ENCODE measurements at regions of chr6 and their contacts with region 1.

Region 1: DNA sequence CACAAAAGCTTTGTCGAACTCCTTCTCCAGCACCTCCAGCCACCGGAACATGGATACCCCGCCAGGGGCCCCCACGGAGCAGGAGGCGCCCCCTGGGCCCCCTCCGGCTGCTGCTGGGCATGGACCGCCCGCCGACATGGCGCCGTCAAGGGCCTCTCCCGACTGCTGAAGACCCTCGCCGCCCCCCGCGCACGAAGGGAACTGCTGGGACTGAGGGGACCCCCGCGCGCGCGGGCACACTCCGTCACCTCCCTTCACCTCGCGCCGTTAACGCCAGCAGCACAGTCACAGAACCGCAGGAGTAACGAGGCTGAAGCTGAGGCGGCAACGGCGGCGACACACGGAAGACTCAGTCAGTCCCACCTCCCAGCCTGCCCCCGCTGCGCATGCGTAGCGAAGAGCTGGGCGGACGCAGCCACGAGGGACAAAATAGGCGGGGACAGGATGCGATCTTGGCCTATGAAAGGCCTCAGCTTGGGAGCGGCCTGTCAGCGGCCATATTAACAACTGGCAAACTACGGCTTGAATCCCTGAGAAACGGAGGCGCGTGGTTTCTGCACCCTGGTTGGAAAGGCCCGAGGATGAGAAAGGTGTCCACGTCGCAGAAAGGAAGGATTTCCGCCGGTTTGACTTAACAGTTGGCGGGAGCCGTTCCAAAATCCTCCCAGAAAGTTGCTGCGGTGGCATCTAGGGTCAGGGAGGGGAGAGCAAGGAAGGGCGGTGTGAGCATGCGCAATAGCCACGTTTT is at the start of gene GOPC:
- DNase-seq: peak; percentile 94 to 98 (median 97)
- H3K4me3 ChIP-seq: peak within 1 kb of the TSS; percentile 53 to 87
- H3K4me3 Mint-ChIP-seq: peak within 1 kb of the TSS; percentile 96 to 100 (median 100)
- H3K27ac ChIP-seq: peak within 1 kb of the TSS; percentile 75
- H3K27ac Mint-ChIP-seq: peak within 1 kb of the TSS; percentile 93 to 100 (median 99)
- H3K4me1 ChIP-seq: peaks cover 38% of the 10 kb centered on the region
- H3K4me1 Mint-ChIP-seq: peaks cover 34 to 52% (median 43%) of the 10 kb centered on the region in 4 donors
- H3K27me3 ChIP-seq: no peaks in the 10 kb centered on the region
- H3K27me3 Mint-ChIP-seq: peaks cover 0 to 3% of the 10 kb centered on the region in 2 donors
- total RNA-seq, gene GOPC: 37.7 to 37.8 TPM

Region 2: DNA sequence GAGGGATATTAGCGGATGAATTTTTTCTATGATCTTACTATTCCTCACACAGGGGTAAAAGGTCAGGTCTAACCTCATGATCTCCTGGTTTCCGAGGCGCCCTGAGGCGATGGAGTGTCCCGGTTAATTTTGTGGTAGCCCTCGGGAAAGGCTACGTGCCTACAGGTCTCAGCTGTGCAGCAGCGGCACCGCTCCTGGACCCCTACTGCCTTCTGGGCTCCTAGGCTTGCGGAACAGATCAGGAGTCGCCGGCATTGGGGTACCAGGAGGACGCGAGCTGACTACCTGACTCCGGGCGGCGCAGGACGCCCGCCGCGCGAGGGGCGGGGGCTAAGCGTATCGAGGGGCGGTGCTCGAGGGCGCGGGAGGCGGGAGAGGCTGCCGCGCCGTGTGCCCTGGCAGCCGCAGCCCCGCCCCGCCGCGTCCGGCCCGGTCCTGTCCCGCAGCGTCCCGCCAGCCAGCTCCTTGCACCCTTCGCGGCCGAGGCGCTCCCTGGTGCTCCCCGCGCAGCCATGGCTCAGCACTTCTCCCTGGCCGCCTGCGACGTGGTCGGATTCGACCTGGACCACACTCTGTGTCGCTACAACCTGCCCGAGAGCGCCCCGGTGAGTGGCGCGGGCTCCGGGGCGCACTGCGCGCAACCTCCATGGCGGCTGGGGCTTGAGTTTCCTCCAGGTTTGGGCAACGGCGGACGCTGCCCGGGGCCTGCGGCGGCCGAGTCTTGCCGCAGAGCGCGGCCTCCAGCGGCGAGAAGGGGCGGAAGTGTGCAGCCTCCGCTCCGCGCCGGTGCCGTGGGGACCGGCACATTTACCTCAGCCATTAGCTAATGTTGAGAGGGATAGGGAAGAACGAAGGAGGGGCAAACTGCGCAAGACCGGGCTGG is 1501.7 kb before region 1 on chr6 and contains the start of gene NT5DC1:
- CTCF ChIA-PET with region 1: no interaction called
- POLR2A ChIA-PET with region 1: no interaction called
- intact Hi-C with region 1: loop called (anchors 2 kb)
- DNase-seq: peak; percentile 81 to 86 (median 84)
- H3K4me3 ChIP-seq: peak within 1 kb of the TSS; percentile 66 to 71
- H3K4me3 Mint-ChIP-seq: peak within 1 kb of the TSS; percentile 94 to 99 (median 98)
- H3K27ac ChIP-seq: peak within 1 kb of the TSS; percentile 86
- H3K27ac Mint-ChIP-seq: peak within 1 kb of the TSS; percentile 89 to 97 (median 93)
- H3K4me1 ChIP-seq: peaks cover 49% of the 10 kb centered on the region
- H3K4me1 Mint-ChIP-seq: peaks cover 44 to 57% (median 48%) of the 10 kb centered on the region in 4 donors
- H3K27me3 ChIP-seq: no peaks in the 10 kb centered on the region
- H3K27me3 Mint-ChIP-seq: no peaks in the 10 kb centered on the region
- total RNA-seq, gene NT5DC1: 50.5 to 51.9 TPM

Region 3: GRCh38 chr6:117346142-117346930 is 256.0 kb before region 1 on chr6:
- CTCF ChIA-PET with region 1: interaction called, 14 read pairs
- POLR2A ChIA-PET with region 1: no interaction called
- intact Hi-C with region 1: loop called (anchors 1 kb)
- DNase-seq: peak in 4 of 5 donors; percentile 22 to 31 (median 28)
- H3K4me3 ChIP-seq: no peak overlapping the region
- H3K4me3 Mint-ChIP-seq: peak overlapping the region in 1 of 8 donors; percentile 12
- H3K27ac ChIP-seq: no peak overlapping the region
- H3K27ac Mint-ChIP-seq: no peak overlapping the region
- H3K4me1 ChIP-seq: no peaks in the 10 kb centered on the region
- H3K4me1 Mint-ChIP-seq: no peaks in the 10 kb centered on the region
- H3K27me3 ChIP-seq: no peaks in the 10 kb centered on the region
- H3K27me3 Mint-ChIP-seq: peaks cover 5 to 6% of the 10 kb centered on the region in 2 donors

Region 4: DNA sequence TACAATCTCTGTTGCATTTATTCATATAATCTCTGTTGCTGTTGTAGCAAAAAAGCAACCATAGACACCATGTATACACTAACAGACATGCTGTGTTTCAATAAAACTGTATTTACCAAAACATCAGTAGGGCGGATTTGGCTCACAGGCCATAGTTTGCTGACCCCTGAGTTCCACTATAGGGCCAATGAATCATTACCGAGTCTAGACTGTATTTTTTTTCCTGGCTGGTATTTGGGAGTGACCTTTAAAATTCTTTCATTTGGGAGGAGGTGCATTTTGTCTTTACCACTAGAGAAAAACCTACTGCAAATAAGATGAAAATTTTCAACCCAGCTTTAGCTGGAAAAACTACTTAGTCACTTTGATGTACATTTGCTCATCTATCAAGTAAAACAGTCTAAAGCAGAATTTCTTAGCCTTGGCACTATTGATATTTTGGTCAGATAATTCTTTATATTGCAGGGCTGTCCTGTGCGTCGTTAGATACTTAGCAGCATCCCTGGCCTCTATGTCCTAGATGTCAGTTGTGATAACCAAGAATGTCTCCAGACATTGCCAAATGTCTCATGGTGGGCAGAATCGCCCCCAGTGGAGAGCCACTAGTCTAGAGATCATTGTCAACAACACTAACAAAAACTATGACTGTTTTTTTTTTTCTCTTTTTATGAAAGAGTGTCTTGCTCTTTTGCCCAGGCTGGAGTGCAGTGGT is 80.4 kb before region 1 on chr6:
- CTCF ChIA-PET with region 1: no interaction called
- POLR2A ChIA-PET with region 1: no interaction called
- intact Hi-C with region 1: no loop called
- DNase-seq: no peak
- H3K4me3 ChIP-seq: no peak overlapping the region
- H3K4me3 Mint-ChIP-seq: no peak overlapping the region
- H3K27ac ChIP-seq: no peak overlapping the region
- H3K27ac Mint-ChIP-seq: no peak overlapping the region
- H3K4me1 ChIP-seq: no peaks in the 10 kb centered on the region
- H3K4me1 Mint-ChIP-seq: no peaks in the 10 kb centered on the region
- H3K27me3 ChIP-seq: no peaks in the 10 kb centered on the region
- H3K27me3 Mint-ChIP-seq: peaks cover 0 to 3% of the 10 kb centered on the region in 2 donors

Region 5: DNA sequence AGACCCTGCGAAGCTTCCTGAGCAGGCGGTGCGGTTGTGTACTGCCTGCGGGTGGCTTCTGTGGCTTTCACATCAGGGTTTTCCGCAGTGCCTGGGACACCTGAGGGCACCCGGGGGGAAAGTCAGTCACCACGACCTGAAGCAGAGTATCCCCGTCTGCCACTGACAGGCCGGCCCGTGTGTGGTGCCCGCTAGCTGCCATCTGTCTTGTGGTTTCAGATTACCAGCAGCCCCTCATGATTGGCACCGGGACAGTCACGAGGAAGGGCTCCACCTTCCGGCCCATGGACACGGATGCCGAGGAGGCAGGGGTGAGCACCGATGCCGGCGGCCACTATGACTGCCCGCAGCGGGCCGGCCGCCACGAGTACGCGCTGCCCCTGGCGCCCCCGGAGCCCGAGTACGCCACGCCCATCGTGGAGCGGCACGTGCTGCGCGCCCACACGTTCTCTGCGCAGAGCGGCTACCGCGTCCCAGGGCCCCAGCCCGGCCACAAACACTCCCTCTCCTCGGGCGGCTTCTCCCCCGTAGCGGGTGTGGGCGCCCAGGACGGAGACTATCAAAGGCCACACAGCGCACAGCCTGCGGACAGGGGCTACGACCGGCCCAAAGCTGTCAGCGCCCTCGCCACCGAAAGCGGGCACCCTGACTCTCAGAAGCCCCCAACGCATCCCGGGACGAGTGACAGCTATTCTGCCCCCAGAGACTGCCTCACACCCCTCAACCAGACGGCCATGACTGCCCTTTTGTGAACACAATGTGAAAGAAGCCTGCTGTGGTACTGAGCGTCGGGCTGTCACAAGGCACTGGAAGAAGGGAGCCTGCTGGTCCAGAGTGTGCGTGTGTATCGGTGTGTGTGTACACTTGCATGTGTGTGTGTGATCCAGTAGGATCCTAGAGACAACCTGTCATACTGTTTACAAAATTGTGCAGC is 54.4 kb before region 1 on chr6:
- CTCF ChIA-PET with region 1: interaction called, 34 read pairs
- POLR2A ChIA-PET with region 1: interaction called, 55 read pairs
- intact Hi-C with region 1: loop called (anchors 1 kb)
- DNase-seq: peak; percentile 32 to 74 (median 43)
- H3K4me3 ChIP-seq: peak overlapping the region; percentile 50 to 73
- H3K4me3 Mint-ChIP-seq: peak overlapping the region; percentile 82 to 91 (median 88)
- H3K27ac ChIP-seq: peak overlapping the region; percentile 41
- H3K27ac Mint-ChIP-seq: peak overlapping the region; percentile 86 to 98 (median 92)
- H3K4me1 ChIP-seq: peaks cover 38% of the 10 kb centered on the region
- H3K4me1 Mint-ChIP-seq: peaks cover 26 to 49% (median 40%) of the 10 kb centered on the region in 4 donors
- H3K27me3 ChIP-seq: no peaks in the 10 kb centered on the region
- H3K27me3 Mint-ChIP-seq: no peaks in the 10 kb centered on the region

Region 6: DNA sequence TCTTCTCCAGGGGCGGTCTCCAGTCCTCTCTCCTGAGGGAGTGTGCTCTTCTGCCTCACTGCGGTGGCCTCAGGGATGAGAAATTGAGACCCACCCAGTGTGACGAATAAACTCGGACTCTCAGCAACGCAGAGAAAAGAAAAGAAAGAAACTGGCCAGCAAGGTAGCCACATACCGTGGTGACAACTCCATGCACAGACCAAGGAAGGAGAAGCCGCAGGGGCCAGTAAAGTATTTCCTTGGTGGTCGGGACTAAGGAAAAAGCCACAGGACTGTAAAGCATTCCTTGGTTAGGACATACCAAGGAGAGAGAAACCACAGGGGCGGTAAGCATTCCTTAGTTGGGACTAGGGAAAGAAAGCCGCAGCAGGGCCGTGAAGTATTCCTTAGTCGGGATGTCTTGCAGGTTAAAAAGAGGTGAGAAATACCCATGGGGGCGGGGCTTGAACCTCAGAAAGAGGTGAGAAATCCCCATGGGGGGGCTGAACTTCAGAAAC is 13.6 kb after region 1 on chr6:
- CTCF ChIA-PET with region 1: interaction called, 11 read pairs
- POLR2A ChIA-PET with region 1: no interaction called
- intact Hi-C with region 1: no loop called
- DNase-seq: no peak
- H3K4me3 ChIP-seq: no peak overlapping the region
- H3K4me3 Mint-ChIP-seq: peak overlapping the region in 2 of 8 donors; percentile 21 to 48
- H3K27ac ChIP-seq: no peak overlapping the region
- H3K27ac Mint-ChIP-seq: peak overlapping the region in 5 of 7 donors; percentile 51 to 89 (median 84)
- H3K4me1 ChIP-seq: peaks cover 15% of the 10 kb centered on the region
- H3K4me1 Mint-ChIP-seq: peaks cover 8 to 40% (median 21%) of the 10 kb centered on the region in 4 donors
- H3K27me3 ChIP-seq: no peaks in the 10 kb centered on the region
- H3K27me3 Mint-ChIP-seq: peaks cover 3 to 4% of the 10 kb centered on the region in 2 donors

Region 7: GRCh38 chr6:117985916-117986315 is 383.6 kb after region 1 on chr6:
- CTCF ChIA-PET with region 1: no interaction called
- POLR2A ChIA-PET with region 1: no interaction called
- intact Hi-C with region 1: no loop called
- DNase-seq: no peak
- H3K4me3 ChIP-seq: no peak overlapping the region
- H3K4me3 Mint-ChIP-seq: no peak overlapping the region
- H3K27ac ChIP-seq: no peak overlapping the region
- H3K27ac Mint-ChIP-seq: no peak overlapping the region
- H3K4me1 ChIP-seq: no peaks in the 10 kb centered on the region
- H3K4me1 Mint-ChIP-seq: no peaks in the 10 kb centered on the region
- H3K27me3 ChIP-seq: no peaks in the 10 kb centered on the region
- H3K27me3 Mint-ChIP-seq: peaks cover 0 to 7% of the 10 kb centered on the region in 2 donors

Region 8: DNA sequence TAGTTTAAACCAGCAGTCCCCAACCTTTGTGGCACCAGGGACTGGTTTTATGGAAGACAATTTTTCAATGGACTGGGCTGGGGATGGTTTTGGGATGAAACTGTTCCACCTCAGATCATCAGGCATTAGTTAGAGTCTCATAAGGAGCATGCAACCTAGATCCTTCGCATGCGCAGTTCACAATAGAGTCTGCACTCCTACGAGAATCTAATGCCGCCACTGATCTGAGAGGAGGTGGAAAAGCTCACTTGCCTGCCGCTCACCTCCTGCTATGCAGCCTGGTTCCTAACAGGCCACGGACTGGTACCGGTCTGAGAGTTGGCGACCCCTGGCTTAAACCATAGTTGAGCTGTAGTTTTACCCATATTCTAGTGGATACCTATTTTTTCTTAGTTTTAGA is 459.3 kb after region 1 on chr6:
- CTCF ChIA-PET with region 1: no interaction called
- POLR2A ChIA-PET with region 1: no interaction called
- intact Hi-C with region 1: no loop called
- DNase-seq: no peak
- H3K4me3 ChIP-seq: no peak overlapping the region
- H3K4me3 Mint-ChIP-seq: no peak overlapping the region
- H3K27ac ChIP-seq: no peak overlapping the region
- H3K27ac Mint-ChIP-seq: no peak overlapping the region
- H3K4me1 ChIP-seq: no peaks in the 10 kb centered on the region
- H3K4me1 Mint-ChIP-seq: no peaks in the 10 kb centered on the region
- H3K27me3 ChIP-seq: no peaks in the 10 kb centered on the region
- H3K27me3 Mint-ChIP-seq: peaks cover 2 to 4% of the 10 kb centered on the region in 2 donors

Region 9: GRCh38 chr6:119349323-119350042 is 1747.2 kb after region 1 on chr6 and contains the start of gene MAN1A1:
- CTCF ChIA-PET with region 1: no interaction called
- POLR2A ChIA-PET with region 1: interaction called, 5 read pairs
- intact Hi-C with region 1: loop called (anchors 1 kb)
- DNase-seq: peak; percentile 85 to 93 (median 91)
- H3K4me3 ChIP-seq: peak within 1 kb of the TSS; percentile 73 to 81
- H3K4me3 Mint-ChIP-seq: peak within 1 kb of the TSS; percentile 86 to 98 (median 94)
- H3K27ac ChIP-seq: peak within 1 kb of the TSS; percentile 88
- H3K27ac Mint-ChIP-seq: peak within 1 kb of the TSS; percentile 83 to 90 (median 88)
- H3K4me1 ChIP-seq: peaks cover 33% of the 10 kb centered on the region
- H3K4me1 Mint-ChIP-seq: peaks cover 31 to 51% (median 37%) of the 10 kb centered on the region in 4 donors
- H3K27me3 ChIP-seq: no peaks in the 10 kb centered on the region
- H3K27me3 Mint-ChIP-seq: no peaks in the 10 kb centered on the region
- total RNA-seq, gene MAN1A1: 12.3 TPM